Dendritic cell treated with granulocyte-macrophage colony-stimulating factor and Interleukin-4, amounts not matched to agents 40 ng/mL and 50 ng/mL, for 4 days (primary cell): ENCODE measurements at regions of chr5 and their contacts with region 1.

Region 1: DNA sequence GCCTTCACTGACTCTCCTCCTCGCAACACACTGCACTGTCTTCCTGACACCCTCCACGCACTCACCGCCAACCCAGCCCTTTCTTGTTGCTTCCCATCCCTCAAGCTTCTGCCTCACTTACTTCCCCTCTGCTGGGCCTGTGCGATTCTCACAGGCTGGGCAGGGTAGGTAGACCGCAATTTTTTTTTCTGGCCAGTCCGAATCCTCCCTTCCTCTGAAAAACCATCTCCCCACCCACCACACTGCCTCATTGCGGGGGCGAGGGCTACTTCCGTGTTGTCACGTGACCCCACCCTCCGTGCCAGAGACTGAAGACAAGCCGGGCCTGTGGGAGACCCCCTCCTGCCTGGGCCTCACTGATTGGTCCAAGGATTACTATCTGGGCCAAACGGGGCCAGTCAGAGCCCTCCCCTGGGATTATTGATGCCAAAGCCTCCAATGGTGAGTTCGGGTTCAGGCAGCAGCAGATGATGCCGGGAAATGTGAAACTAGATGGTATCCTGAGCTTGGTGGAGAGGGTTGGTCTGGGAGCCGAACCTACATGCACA is 73.1 kb downstream of the STK10 start:
- H3K4me3 Mint-ChIP-seq: peak overlapping the region; percentile 67
- H3K27ac Mint-ChIP-seq: peak overlapping the region; percentile 90
- H3K4me1 Mint-ChIP-seq: peaks cover 80% of the 10 kb centered on the region
- H3K27me3 Mint-ChIP-seq: no peaks in the 10 kb centered on the region

Region 2: GRCh38 chr5:172133359-172134029 is 18.5 kb after region 1 on chr5:
- intact Hi-C with region 1: loop called (anchors 2 kb)
- H3K4me3 Mint-ChIP-seq: no peak overlapping the region
- H3K27ac Mint-ChIP-seq: peak overlapping the region; percentile 98
- H3K4me1 Mint-ChIP-seq: peaks cover 70% of the 10 kb centered on the region
- H3K27me3 Mint-ChIP-seq: no peaks in the 10 kb centered on the region